Heart left ventricle (tissue), 16 donors: ENCODE measurements at regions of chr3 and their contacts with region 1.

Region 1: GRCh38 chr3:192514081-192514753 is 213.1 kb downstream of the FGF12 start:
- DNase-seq: peak in 1 of 5 donors; percentile 50
- ATAC-seq: no peak
- H3K4me3 ChIP-seq: peak overlapping the region; percentile 22 to 64 (median 56)
- H3K27ac ChIP-seq: peak overlapping the region in 6 of 12 donors; percentile 45 to 76 (median 68)
- H3K4me1 ChIP-seq: peaks cover 0 to 51% (median 21%) of the 10 kb centered on the region in 12 donors
- H3K27me3 ChIP-seq: peaks cover 0 to 30% (median 0%) of the 10 kb centered on the region in 9 donors
- CTCF ChIP-seq: no peak
- POLR2A ChIP-seq: no peak

Region 2: DNA sequence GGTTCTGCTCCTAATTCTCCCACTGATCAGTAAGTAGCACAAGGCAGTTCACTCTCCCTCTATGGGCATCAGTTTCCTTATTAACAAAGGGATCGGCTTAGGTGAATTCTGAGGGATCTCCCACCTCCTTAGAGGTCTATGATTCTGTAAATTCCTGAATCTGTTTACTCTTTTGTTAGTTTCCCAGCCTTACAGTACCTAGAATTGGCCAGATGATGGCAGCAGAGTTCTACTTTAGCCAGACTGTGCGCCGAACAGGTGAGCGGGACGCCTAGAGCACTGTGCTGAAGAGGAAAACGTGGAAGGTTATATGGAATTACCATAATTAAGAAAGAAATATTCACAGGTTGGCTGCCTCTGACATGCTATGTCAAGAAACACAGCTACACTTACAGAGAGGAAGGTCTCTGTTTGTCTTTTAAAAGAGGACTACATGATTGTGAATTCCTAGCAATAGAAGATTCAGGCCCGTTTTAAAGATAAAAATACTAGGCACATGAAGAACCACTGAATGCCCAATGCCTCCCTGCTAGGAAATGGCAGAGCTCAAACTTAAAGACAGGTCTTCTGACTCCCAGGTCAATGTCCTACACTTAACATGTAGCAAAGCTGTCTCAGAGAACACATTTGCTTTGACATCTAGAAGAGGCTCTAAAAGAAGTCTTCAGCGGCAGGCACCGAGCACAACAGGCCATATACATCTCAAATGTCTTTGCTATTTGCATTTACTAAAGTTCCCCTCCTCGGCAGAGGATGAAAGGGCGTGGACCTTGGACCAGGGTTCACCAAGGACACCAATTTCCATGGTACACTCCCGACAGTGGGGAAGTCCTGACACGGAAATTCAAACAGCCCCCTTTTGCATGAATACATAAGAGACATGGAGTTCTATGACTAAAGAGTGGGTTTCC is 46.7 kb before region 1 on chr3:
- intact Hi-C with region 1: no loop called
- DNase-seq: peak in 4 of 5 donors; percentile 33 to 45 (median 38)
- ATAC-seq: peak; percentile 45 to 85 (median 80)
- H3K4me3 ChIP-seq: no peak overlapping the region
- H3K27ac ChIP-seq: peak overlapping the region in 1 of 12 donors; percentile 6
- H3K4me1 ChIP-seq: peaks cover 0 to 5% (median 0%) of the 10 kb centered on the region in 12 donors
- H3K27me3 ChIP-seq: peaks cover 0 to 2% (median 0%) of the 10 kb centered on the region in 9 donors
- CTCF ChIP-seq: peak; percentile 83 to 97 (median 92)
- POLR2A ChIP-seq: no peak

Region 3: GRCh38 chr3:192494174-192494573 is 20.0 kb before region 1 on chr3:
- intact Hi-C with region 1: loop called in 1 of 10 experiments (anchors 2 kb)
- DNase-seq: no peak
- ATAC-seq: peak; percentile 40 to 80 (median 59)
- H3K4me3 ChIP-seq: no peak overlapping the region
- H3K27ac ChIP-seq: peak overlapping the region in 7 of 12 donors; percentile 0 to 54 (median 33)
- H3K4me1 ChIP-seq: peaks cover 0 to 30% (median 6%) of the 10 kb centered on the region in 12 donors
- H3K27me3 ChIP-seq: no peaks in the 10 kb centered on the region
- CTCF ChIP-seq: no peak
- POLR2A ChIP-seq: no peak

Region 4: GRCh38 chr3:192553707-192554106 is 39.5 kb after region 1 on chr3:
- intact Hi-C with region 1: loop called in 1 of 10 experiments (anchors 5 kb)
- DNase-seq: peak in 1 of 5 donors; percentile 8
- ATAC-seq: no peak
- H3K4me3 ChIP-seq: no peak overlapping the region
- H3K27ac ChIP-seq: peak overlapping the region in 1 of 12 donors; percentile 30
- H3K4me1 ChIP-seq: peaks cover 0 to 26% (median under 1%) of the 10 kb centered on the region in 12 donors
- H3K27me3 ChIP-seq: no peaks in the 10 kb centered on the region
- CTCF ChIP-seq: no peak
- POLR2A ChIP-seq: no peak